ENCODE measurements at regions of chr20 and their contacts with region 1.

Region 1: DNA sequence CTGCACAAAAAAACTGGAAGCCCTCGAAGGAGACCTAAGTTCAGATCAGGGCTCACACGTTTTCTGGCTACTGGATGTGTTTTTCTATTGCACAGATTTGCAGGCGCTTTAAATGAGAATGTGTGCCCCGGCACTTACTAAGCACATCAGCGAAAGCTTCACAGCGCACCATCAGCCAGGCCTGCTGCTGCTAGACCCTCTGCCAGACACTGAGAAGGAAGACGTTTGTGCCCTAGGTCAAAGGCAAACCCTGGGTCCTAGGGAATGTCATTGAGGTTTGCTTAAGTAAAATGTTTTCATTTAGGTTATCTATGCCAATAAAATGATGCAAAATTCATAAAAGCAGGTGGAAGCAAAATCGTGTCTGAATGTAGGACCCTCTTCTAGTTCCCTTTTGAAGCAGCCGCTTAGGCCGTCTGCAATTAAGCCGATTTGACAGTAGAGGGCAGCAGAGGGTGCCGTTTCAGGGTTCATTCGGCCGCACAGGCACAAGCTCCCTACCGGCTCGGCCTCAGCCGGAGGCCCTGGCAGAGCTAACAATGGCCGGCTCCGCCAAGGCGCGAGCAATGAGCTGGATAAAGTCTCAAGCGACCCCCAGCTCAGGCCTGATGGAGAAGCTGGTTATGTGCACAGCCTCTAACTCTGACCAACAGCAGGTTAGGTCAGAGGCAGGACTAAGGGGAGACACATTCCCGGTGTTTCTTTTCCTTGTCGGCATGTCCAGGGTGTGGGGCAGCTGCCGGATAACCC is 107.2 kb upstream of the FOXA2 start:
- DNase-seq: peak; percentile 71
- H3K4me3 ChIP-seq: peak overlapping the region; percentile 34
- H3K27ac ChIP-seq: peak overlapping the region; percentile 67
- H3K4me1 ChIP-seq: peaks cover 33% of the 10 kb centered on the region
- H3K27me3 ChIP-seq: peaks cover 14% of the 10 kb centered on the region
- CTCF ChIP-seq: peak; percentile 96

Region 2: DNA sequence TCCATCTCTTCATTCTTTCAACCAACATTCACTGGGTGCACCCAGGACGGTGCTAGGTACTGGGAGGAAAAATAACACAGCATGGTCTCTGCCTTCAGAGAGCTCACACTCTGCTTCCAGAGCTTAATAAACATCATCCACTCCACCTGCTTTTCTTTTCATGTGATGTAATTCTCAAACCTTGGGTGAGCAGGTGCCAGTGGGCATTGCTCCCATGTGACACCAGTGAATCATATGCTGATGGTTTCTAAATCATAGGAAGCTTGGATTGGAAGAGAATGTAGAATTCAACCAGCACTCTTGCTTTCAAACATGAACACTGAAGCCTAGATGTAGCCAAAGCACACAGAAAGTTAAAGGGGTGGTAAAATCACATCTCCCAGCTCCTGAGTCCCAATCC is 297.0 kb before region 1 on chr20:
- intact Hi-C with region 1: no loop called
- DNase-seq: no peak
- H3K4me3 ChIP-seq: no peak overlapping the region
- H3K27ac ChIP-seq: no peak overlapping the region
- H3K4me1 ChIP-seq: no peaks in the 10 kb centered on the region
- H3K27me3 ChIP-seq: peaks cover 70% of the 10 kb centered on the region
- CTCF ChIP-seq: no peak

Region 3: DNA sequence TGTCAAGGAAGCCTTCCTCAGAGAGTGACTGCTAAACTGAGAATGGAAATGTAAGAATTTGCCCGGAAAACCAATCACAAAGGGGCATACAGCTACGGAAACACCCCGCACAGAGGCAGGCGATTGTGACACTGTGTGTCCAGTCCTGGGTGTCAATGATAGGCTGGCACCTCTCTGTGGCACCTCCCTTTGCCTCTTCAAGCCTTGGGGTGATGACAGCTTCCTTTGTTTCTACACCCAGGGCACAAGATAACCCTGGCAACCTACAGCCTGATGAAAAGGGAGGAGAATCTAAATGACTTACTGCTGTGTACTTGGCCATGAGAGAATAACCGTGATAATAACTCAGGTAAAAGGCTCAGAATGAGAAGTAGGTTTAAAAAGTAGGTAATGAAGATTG is 250.0 kb after region 1 on chr20:
- intact Hi-C with region 1: no loop called
- DNase-seq: no peak
- H3K4me3 ChIP-seq: no peak overlapping the region
- H3K27ac ChIP-seq: no peak overlapping the region
- H3K4me1 ChIP-seq: peaks cover 6% of the 10 kb centered on the region
- H3K27me3 ChIP-seq: peaks cover 75% of the 10 kb centered on the region
- CTCF ChIP-seq: no peak

Region 4: DNA sequence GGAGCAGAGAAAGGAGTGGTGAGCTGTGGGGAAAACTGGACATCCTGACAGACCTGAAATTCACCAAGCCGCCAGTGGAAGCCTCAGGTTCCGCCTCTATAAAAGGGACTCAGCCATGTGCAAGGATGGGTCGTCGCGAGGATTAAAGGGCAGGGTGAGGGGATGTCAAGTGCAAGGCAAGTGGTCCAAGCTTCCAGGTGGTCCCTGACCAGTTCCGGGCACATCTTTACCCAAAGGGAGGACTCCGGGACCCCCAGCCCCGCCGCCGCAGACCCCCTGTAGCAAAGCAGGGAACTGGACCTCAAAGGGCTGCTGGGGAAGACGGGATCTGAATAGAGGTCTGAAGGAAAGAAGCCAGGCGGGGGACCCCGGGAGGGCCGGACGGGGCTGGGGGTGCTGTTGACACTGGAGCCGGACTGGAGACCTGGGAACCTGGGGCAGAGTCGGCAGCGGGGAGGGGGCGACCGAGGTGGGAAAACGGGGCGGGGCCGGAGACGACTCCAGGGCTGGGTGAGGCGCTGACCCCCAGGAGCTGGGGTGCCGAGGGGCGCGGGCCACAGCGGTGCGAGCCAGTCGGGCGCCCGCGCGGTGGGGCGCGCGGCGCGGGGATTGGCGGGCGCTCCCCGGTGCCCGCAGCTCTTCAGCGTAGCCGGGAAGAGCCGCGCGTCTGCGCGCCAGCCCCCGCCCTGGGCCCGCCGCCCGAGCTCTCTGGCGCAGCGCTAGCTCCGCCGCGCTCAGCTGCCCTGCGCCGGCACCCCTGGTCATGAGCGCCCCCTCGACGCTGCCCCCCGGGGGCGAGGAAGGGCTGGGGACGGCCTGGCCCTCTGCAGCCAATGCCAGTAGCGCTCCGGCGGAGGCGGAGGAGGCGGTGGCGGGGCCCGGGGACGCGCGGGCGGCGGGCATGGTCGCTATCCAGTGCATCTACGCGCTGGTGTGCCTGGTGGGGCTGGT is 343.5 kb after region 1 on chr20 and contains the start of gene SSTR4:
- intact Hi-C with region 1: no loop called
- DNase-seq: no peak
- H3K4me3 ChIP-seq: peak within 1 kb of the TSS; percentile 54
- H3K27ac ChIP-seq: no peak within 1 kb of the TSS
- H3K4me1 ChIP-seq: peaks cover 27% of the 10 kb centered on the region
- H3K27me3 ChIP-seq: peaks cover 76% of the 10 kb centered on the region
- CTCF ChIP-seq: no peak
- total RNA-seq, gene SSTR4: not detected

Region 5: GRCh38 chr20:23050847-23051631 is 359.5 kb after region 1 on chr20:
- intact Hi-C with region 1: loop called (anchors 10 kb)
- DNase-seq: peak; percentile 87
- H3K4me3 ChIP-seq: peak overlapping the region; percentile 80
- H3K27ac ChIP-seq: peak overlapping the region; percentile 96
- H3K4me1 ChIP-seq: peaks cover 57% of the 10 kb centered on the region
- H3K27me3 ChIP-seq: peaks cover 68% of the 10 kb centered on the region
- CTCF ChIP-seq: peak; percentile 79

Region 6: GRCh38 chr20:23225407-23226072 is 534.0 kb after region 1 on chr20:
- intact Hi-C with region 1: loop called (anchors 10 kb)
- DNase-seq: peak; percentile 48
- H3K4me3 ChIP-seq: no peak overlapping the region
- H3K27ac ChIP-seq: peak overlapping the region; percentile 33
- H3K4me1 ChIP-seq: peaks cover 15% of the 10 kb centered on the region
- H3K27me3 ChIP-seq: no peaks in the 10 kb centered on the region
- CTCF ChIP-seq: no peak

Region 7: GRCh38 chr20:23337301-23337700 is 645.8 kb after region 1 on chr20:
- intact Hi-C with region 1: loop called (anchors 5 kb)
- DNase-seq: no peak
- H3K4me3 ChIP-seq: no peak overlapping the region
- H3K27ac ChIP-seq: no peak overlapping the region
- H3K4me1 ChIP-seq: peaks cover 18% of the 10 kb centered on the region
- H3K27me3 ChIP-seq: no peaks in the 10 kb centered on the region
- CTCF ChIP-seq: no peak